MCF 10A (cell line): ENCODE measurements at regions of chr6 and their contacts with region 1.

Region 1: GRCh38 chr6:32413427-32414047 is 6.6 kb upstream of the BTNL2 start:
- DNase-seq: peak; percentile 67
- H3K4me3 Mint-ChIP-seq: no peak overlapping the region
- H3K27ac Mint-ChIP-seq: no peak overlapping the region
- H3K4me1 Mint-ChIP-seq: no peaks in the 10 kb centered on the region
- H3K27me3 Mint-ChIP-seq: peaks cover 80% of the 10 kb centered on the region
- CTCF ChIP-seq: peak; percentile 91

Region 2: GRCh38 chr6:32271429-32271828 is 142.1 kb before region 1 on chr6:
- CTCF ChIA-PET with region 1: no interaction called
- POLR2A ChIA-PET with region 1: no interaction called
- intact Hi-C with region 1: no loop called
- DNase-seq: no peak
- H3K4me3 Mint-ChIP-seq: no peak overlapping the region
- H3K27ac Mint-ChIP-seq: no peak overlapping the region
- H3K4me1 Mint-ChIP-seq: no peaks in the 10 kb centered on the region
- H3K27me3 Mint-ChIP-seq: peaks cover 44% of the 10 kb centered on the region
- CTCF ChIP-seq: no peak

Region 3: DNA sequence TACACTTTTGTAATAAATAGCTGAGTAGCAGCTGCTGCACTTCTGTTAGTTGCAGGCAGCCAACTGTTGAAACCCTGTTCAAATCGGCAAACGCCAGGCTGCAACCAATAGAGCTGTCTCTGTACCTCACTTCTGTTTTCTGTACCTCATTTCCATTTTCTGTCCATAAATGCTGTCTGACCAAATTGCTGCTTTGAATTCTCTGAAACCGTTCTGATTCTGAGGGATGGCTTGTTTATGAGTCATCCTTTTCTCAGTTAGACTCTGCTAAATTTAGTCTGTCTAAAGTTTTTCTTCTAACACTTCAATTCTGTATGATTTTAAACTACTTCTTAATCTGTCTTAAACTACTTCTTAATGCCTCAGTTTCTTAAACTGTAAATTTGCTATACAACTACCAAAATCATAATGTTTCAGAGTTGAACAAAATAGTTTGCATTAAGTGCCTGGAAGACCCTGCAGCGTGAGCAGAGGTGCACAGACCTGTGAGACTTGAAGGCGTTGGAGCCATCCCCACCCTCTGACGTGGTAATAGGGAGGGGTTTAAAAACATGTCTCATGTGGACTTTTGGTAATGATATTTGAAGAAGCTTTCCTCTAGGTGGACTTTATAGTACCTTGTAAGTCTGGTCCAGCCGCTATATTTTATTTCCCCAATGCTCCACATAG is 16.2 kb before region 1 on chr6:
- CTCF ChIA-PET with region 1: interaction called, 12 read pairs
- POLR2A ChIA-PET with region 1: no interaction called
- intact Hi-C with region 1: no loop called
- DNase-seq: no peak
- H3K4me3 Mint-ChIP-seq: no peak overlapping the region
- H3K27ac Mint-ChIP-seq: no peak overlapping the region
- H3K4me1 Mint-ChIP-seq: peaks cover 5% of the 10 kb centered on the region
- H3K27me3 Mint-ChIP-seq: peaks cover 89% of the 10 kb centered on the region
- CTCF ChIP-seq: no peak

Region 4: DNA sequence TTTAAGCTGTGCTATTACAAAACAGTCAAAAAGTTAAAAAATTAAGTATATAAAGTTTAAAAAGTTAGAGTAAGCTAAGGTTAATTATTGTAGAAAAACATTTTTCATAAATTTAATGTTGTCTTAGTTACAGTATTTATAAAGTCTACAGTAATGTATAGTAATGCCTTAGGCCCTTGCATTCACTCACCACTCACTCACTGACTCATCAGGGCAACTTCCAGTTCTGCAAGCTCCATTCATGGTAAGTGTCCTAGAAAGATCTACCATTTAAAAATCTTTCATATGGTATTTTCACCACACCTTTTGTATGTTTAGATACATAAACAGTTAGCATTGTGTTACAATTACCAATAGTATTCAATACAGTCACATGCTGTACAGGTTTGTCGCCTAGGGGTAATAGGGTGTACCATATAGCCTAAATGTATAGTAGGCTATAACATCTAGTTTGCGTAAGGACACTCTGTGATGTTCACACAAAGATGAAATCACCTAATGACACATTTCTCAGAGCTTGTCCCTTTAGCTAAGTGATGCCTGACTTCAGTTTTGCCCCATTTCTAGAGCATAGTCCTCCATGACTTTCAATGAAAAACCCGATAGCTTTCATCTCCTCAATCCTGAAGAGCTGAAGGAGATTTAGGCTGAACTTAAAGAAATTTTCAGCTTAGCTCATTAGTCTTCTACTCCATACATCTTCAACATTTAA is 11.2 kb after region 1 on chr6:
- CTCF ChIA-PET with region 1: interaction called, 50 read pairs
- POLR2A ChIA-PET with region 1: no interaction called
- intact Hi-C with region 1: no loop called
- DNase-seq: no peak
- H3K4me3 Mint-ChIP-seq: no peak overlapping the region
- H3K27ac Mint-ChIP-seq: no peak overlapping the region
- H3K4me1 Mint-ChIP-seq: no peaks in the 10 kb centered on the region
- H3K27me3 Mint-ChIP-seq: peaks cover 60% of the 10 kb centered on the region
- CTCF ChIP-seq: no peak

Region 5: DNA sequence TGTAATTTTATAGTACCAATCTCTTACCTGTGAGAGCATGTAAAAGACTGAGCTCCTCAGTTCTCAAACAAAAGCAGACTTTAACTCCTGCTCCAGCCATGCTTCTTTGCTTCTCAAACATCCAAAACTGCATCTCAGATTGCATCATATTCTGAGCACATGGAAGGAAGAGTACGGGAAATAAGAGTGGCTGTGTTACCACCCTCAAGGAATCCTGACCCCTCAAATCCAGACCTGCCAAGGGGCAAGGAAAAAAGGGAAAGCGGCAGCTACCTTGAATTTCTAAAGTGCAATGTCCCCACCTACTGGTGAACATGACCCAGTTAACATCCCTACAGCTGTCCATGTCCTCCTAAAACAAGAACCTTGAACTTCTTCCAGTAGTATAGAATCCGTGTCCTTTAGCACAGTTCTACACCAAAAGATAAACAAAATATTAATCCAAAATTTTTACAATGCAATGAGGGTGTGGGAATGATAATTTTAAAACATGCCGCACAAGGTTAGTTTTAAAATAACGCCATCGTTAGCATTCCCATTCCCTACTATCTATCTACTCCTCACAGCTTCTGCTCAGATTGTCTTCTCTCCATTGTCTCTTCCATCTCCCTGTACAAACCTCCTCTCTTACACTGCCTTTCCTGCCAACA is 287.0 kb after region 1 on chr6:
- CTCF ChIA-PET with region 1: interaction called, 33 read pairs
- POLR2A ChIA-PET with region 1: no interaction called
- intact Hi-C with region 1: loop called (anchors 1 kb)
- DNase-seq: peak; percentile 73
- H3K4me3 Mint-ChIP-seq: no peak overlapping the region
- H3K27ac Mint-ChIP-seq: no peak overlapping the region
- H3K4me1 Mint-ChIP-seq: no peaks in the 10 kb centered on the region
- H3K27me3 Mint-ChIP-seq: peaks cover 89% of the 10 kb centered on the region
- CTCF ChIP-seq: peak; percentile 45

Region 6: GRCh38 chr6:32796848-32797776 is 383.6 kb after region 1 on chr6:
- CTCF ChIA-PET with region 1: interaction called, 22 read pairs
- POLR2A ChIA-PET with region 1: no interaction called
- intact Hi-C with region 1: no loop called
- DNase-seq: peak; percentile 66
- H3K4me3 Mint-ChIP-seq: peak overlapping the region; percentile 62
- H3K27ac Mint-ChIP-seq: no peak overlapping the region
- H3K4me1 Mint-ChIP-seq: peaks cover 12% of the 10 kb centered on the region
- H3K27me3 Mint-ChIP-seq: peaks cover 76% of the 10 kb centered on the region
- CTCF ChIP-seq: peak; percentile 84